AG04450 (cell line): ENCODE measurements at regions of chr10 and their contacts with region 1.

Region 1: DNA sequence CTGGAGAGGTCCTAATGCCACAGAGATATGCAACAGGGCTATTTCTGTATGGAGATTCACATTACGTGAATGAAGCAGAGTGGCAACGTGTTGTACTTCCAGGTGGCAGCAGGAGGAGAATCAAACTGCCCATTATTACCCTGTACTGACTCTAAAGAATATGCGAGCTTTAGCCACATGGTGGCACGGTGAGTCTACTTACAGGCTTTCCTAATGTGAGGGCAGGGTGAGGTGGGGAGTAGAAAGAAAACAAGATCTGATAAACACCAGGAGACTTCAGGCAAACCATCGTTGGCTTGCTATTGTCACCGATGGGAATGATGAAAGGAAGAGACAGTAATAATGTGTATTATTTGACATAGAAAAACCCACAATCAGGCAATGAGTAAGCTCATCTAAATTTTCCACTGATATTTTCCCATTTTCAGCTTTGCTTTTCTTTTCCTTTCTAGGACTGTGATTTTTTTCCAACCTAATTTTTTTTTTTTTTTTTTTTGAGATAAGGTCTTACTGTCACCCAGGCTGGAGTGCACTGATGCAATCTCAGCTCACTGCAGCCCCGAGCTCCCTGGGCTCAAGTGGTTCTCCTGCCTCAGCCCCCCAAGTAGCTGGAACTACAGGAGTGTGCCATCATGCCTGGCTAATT is 164.3 kb downstream of the BTAF1 start:
- DNase-seq: peak; percentile 57
- H3K4me3 ChIP-seq: no peak overlapping the region
- H3K27ac ChIP-seq: no peak overlapping the region
- H3K27me3 ChIP-seq: no peaks in the 10 kb centered on the region
- CTCF ChIP-seq: peak; percentile 87

Region 2: DNA sequence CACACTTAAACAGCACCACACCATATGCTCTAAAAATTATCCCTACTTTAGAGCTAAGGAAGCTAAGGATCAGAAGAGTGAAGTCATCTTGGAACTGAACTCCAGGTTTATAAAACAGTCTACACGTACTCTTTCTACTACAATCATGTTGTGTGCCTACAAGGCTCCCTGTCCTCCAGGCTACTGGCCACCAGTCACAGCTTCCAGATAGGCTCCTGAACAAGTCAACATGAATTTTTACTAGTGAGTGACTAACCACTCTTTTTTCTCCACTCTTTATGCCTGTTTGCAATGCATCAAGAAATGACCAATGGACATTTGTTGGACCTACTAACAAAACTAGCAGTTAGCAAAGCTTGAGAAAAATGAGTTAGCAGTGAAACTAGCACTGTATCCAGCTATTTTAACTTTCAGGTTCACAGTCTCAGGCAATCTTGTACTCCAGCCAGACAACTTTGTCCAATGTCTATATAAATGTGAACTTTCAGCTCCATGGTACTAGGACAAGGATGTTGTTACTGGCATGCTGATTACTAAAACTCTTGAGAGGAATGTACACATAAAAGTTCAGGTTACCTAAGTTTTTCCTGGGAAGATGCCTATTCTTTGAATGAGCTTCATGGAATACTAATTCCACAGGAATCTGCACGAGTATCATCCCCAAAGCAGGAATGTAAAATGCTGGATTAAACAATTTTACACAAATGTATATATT is 15.7 kb after region 1 on chr10:
- CTCF ChIA-PET with region 1: interaction called, 20 read pairs
- POLR2A ChIA-PET with region 1: interaction called, 5 read pairs
- DNase-seq: peak; percentile 38
- H3K4me3 ChIP-seq: no peak overlapping the region
- H3K27ac ChIP-seq: no peak overlapping the region
- H3K27me3 ChIP-seq: no peaks in the 10 kb centered on the region
- CTCF ChIP-seq: no peak

Region 3: GRCh38 chr10:92290837-92291615 is 203.2 kb after region 1 on chr10 and contains the starts of genes CPEB3 and MARCHF5:
- CTCF ChIA-PET with region 1: interaction called, 66 read pairs
- POLR2A ChIA-PET with region 1: interaction called, 5 read pairs
- DNase-seq: peak; percentile 87
- H3K4me3 ChIP-seq: peak within 1 kb of the TSS; percentile 96
- H3K27ac ChIP-seq: peak within 1 kb of the TSS; percentile 73
- H3K27me3 ChIP-seq: no peaks in the 10 kb centered on the region
- CTCF ChIP-seq: peak; percentile 72
- polyA plus RNA-seq, gene CPEB3: 0.36 TPM in 2 replicates
- polyA plus RNA-seq, gene MARCHF5: 26.3 and 34.9 TPM in 2 replicates

Region 4: GRCh38 chr10:92419740-92420545 is 332.1 kb after region 1 on chr10:
- CTCF ChIA-PET with region 1: interaction called, 19 read pairs
- POLR2A ChIA-PET with region 1: no interaction called
- DNase-seq: no peak
- H3K4me3 ChIP-seq: peak overlapping the region; percentile 18
- H3K27ac ChIP-seq: no peak overlapping the region
- H3K27me3 ChIP-seq: peaks cover 18% of the 10 kb centered on the region
- CTCF ChIP-seq: peak; percentile 64

Region 5: GRCh38 chr10:92432596-92432995 is 344.7 kb after region 1 on chr10:
- CTCF ChIA-PET with region 1: interaction called, 24 read pairs
- POLR2A ChIA-PET with region 1: no interaction called
- DNase-seq: no peak
- H3K4me3 ChIP-seq: no peak overlapping the region
- H3K27ac ChIP-seq: no peak overlapping the region
- H3K27me3 ChIP-seq: no peaks in the 10 kb centered on the region
- CTCF ChIP-seq: no peak

Region 6: DNA sequence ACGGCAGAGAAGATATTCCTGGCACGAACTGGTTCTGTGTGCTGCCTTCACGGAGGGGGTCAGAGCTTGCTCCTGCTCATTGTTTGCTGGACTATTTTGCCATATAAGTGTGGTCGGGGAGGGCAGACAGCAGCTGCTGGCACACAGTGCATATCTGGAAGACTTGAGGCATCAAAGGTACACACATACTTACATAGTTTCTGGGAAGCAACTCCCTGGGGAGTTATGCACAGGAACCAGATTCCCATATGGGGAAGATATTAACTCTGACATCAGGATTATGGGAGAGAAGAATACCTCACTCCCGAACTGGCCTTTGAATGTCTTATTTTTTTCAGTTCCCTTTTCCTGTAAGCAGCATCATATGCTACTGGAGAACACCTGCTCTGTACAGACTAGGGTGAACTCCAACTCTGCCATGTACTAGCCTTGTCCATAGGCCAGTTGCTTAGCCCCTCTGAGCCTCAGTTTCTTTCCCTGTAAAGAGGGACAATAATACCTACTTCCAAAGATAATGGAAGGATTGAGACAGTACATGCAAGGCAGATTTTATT is 1711.4 kb after region 1 on chr10:
- CTCF ChIA-PET with region 1: no interaction called
- POLR2A ChIA-PET with region 1: no interaction called
- DNase-seq: no peak
- H3K4me3 ChIP-seq: no peak overlapping the region
- H3K27ac ChIP-seq: no peak overlapping the region
- H3K27me3 ChIP-seq: peaks cover 9% of the 10 kb centered on the region
- CTCF ChIP-seq: no peak